Cardiac septum (tissue), 1 donor: ENCODE measurements at regions of chr5 and their contacts with region 1.

Region 1: GRCh38 chr5:168027007-168027406 is 264.4 kb upstream of the WWC1 start:
- DNase-seq: no peak

Region 2: DNA sequence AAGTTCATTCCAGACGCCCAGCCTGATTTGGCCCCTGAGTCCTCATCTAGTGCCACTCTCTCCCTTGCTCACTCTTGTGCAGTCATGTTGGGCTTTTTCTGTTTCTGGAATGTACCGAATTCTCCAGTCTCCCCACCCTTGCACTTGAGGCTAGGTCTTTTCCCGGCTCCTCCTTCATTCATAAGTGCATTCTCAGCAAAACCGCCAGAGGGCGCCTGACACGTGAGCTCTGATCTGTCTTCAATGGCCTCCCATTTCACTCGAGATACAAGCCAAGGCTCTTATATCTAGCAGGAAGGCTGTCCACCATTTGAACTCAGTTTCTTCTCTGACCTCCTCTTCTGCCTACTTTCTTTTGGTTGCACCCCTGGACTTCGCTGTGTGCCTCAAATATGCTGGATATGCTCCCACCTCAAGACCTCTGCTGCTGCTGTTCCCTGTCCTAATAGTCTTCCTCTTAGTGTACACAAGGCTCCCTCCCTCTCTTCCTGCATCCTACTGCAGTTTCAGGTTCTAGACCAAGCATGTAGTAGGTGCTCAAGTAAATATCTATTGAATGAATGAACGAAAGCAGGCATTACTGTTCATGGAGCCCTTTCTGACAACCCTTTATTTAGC is 303.6 kb before region 1 on chr5:
- intact Hi-C with region 1: loop called (anchors 5 kb)
- DNase-seq: peak; percentile 84